Naive thymus-derived CD4-positive, alpha-beta T cell (primary cell): ENCODE measurements at regions of chr7 and their contacts with region 1.

Region 1: DNA sequence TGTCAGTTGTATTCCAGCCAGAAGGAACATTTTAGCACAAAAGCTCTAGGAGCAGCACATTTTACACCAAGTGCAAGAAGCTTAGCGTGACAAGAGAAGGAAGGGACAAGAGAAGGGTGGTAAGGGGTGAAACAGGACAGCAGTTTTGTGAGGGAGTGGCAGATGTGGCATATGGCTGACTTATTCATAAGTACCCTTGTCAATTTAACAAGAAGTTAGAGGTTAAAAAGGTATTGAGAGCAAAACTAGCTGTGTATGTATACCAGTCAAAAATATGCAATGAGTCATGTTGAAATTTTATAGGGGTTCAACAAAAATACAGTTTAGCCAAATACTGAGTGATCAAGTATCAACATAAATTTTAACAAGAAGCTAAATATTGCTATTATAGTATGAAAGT is 561.5 kb upstream of the POT1 start:
- DNase-seq: no peak
- ATAC-seq: no peak
- H3K4me3 ChIP-seq: no peak overlapping the region
- H3K4me3 Mint-ChIP-seq: no peak overlapping the region
- H3K27ac ChIP-seq: no peak overlapping the region
- H3K27ac Mint-ChIP-seq: no peak overlapping the region
- H3K4me1 ChIP-seq: no peaks in the 10 kb centered on the region
- H3K4me1 Mint-ChIP-seq: peaks cover 0 to 1% (median 0%) of the 10 kb centered on the region in 7 donors
- H3K27me3 ChIP-seq: no peaks in the 10 kb centered on the region
- H3K27me3 Mint-ChIP-seq: no peaks in the 10 kb centered on the region

Region 2: GRCh38 chr7:124879771-124880170 is 611.4 kb before region 1 on chr7:
- CTCF ChIA-PET with region 1: no interaction called
- POLR2A ChIA-PET with region 1: no interaction called
- intact Hi-C with region 1: loop called in 1 of 2 experiments (anchors 10 kb)
- DNase-seq: no peak
- ATAC-seq: no peak
- H3K4me3 ChIP-seq: no peak overlapping the region
- H3K4me3 Mint-ChIP-seq: no peak overlapping the region
- H3K27ac ChIP-seq: no peak overlapping the region
- H3K27ac Mint-ChIP-seq: no peak overlapping the region
- H3K4me1 ChIP-seq: no peaks in the 10 kb centered on the region
- H3K4me1 Mint-ChIP-seq: no peaks in the 10 kb centered on the region
- H3K27me3 ChIP-seq: no peaks in the 10 kb centered on the region
- H3K27me3 Mint-ChIP-seq: no peaks in the 10 kb centered on the region

Region 3: GRCh38 chr7:125504848-125505247 is 13.7 kb after region 1 on chr7:
- CTCF ChIA-PET with region 1: no interaction called
- POLR2A ChIA-PET with region 1: no interaction called
- intact Hi-C with region 1: no loop called
- DNase-seq: no peak
- ATAC-seq: no peak
- H3K4me3 ChIP-seq: no peak overlapping the region
- H3K4me3 Mint-ChIP-seq: no peak overlapping the region
- H3K27ac ChIP-seq: no peak overlapping the region
- H3K27ac Mint-ChIP-seq: no peak overlapping the region
- H3K4me1 ChIP-seq: no peaks in the 10 kb centered on the region
- H3K4me1 Mint-ChIP-seq: no peaks in the 10 kb centered on the region
- H3K27me3 ChIP-seq: no peaks in the 10 kb centered on the region
- H3K27me3 Mint-ChIP-seq: no peaks in the 10 kb centered on the region